Posterior vena cava (tissue), 2 donors: ENCODE measurements at regions of chr11 and their contacts with region 1.

Region 1: DNA sequence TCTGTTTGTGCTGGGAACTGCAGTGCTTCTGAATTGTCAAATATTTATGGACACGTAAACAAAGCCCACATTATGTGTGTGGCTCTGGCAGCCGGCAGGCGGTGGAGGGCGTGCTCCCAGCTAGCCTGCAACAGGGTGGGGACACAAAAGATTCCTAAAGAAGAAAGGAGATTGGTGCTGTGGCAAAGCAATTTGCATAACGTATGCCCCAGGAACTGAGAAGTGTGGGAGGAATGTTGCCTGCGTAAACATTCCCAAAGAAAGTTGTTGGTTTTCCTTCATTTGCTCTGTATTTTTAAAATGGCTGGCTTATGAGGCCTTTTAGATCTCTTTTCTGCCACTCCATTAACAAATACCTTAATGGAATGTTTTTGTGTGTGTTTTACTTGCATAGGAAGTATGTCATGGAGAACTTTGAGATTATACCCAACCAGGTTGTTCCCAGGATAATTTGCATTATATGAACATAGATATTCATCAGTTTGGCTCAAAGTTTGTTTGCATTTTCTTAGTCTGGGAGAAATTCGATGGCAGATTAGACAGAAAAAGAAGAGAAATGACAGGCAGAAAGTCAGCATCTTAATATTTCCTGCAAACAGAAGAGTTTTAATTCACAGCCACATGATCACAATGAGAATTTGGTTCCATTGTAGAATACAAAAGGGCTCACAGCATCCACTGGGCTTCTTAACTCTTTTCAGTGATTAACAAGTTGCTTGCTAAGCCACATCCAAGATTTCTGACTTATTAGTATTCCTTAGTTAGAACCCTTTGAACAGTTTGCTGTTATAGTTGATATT is 41.8 kb upstream of the DLAT start:
- DNase-seq: no peak

Region 2: GRCh38 chr11:111944651-111945051 is 38.7 kb before region 1 on chr11:
- intact Hi-C with region 1: loop called (anchors 1 to 5 kb)
- DNase-seq: peak; percentile 34